Panc1 (cell line): ENCODE measurements at regions of chr5 and their contacts with region 1.

Region 1: DNA sequence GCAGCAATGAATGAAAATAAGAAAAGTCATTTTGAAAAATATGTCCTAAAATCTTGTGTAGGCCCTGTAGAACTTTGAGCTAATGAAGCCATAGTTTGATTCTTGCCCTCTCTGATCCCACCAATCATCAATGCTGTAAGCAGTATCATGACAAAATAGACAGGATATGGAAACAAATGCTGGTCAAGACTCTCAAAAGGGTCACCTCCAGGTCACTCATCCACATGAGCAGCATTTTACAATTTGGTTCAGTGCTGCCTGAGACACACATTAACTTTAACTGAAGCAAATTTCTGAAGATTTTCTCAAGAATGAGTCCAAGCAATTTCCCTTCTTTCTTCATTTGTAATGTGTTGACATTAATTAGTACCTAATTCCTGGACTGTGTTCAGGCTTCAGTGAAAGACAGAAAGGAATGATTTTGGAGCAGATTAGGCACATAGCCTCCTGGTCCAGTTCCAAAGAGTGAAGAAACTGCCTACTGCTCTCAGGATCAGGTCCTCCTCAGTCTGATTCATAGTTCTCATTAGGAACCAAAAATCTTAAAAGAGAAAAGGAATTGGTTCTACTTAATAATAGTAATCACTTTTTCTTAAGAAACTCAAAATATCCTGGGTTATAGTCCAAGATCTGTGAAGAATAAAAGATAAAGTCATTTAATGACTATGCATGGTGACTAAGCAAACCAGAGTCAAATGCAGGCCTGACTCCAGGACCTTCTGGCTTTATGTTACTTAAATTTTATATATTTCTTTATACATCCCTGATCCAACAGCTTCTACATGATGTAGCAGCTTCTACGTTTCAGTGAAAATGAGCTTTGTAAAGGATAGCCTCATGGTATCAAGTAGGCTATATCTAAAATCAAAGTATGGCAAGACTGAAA is 192.1 kb upstream of the RGMB start:
- DNase-seq: no peak
- ATAC-seq: no peak
- H3K4me3 ChIP-seq: no peak overlapping the region
- H3K27ac ChIP-seq: no peak overlapping the region
- H3K4me1 ChIP-seq: no peaks in the 10 kb centered on the region
- H3K27me3 ChIP-seq: no peaks in the 10 kb centered on the region
- CTCF ChIP-seq: no peak

Region 2: GRCh38 chr5:98200726-98201541 is 380.4 kb before region 1 on chr5:
- CTCF ChIA-PET with region 1: no interaction called
- POLR2A ChIA-PET with region 1: no interaction called
- in situ Hi-C with region 1: no loop called
- intact Hi-C with region 1: no loop called
- DNase-seq: no peak
- ATAC-seq: no peak
- H3K4me3 ChIP-seq: no peak overlapping the region
- H3K27ac ChIP-seq: no peak overlapping the region
- H3K4me1 ChIP-seq: no peaks in the 10 kb centered on the region
- H3K27me3 ChIP-seq: no peaks in the 10 kb centered on the region
- CTCF ChIP-seq: no peak

Region 3: GRCh38 chr5:98521821-98522220 is 59.5 kb before region 1 on chr5:
- CTCF ChIA-PET with region 1: no interaction called
- POLR2A ChIA-PET with region 1: no interaction called
- in situ Hi-C with region 1: no loop called
- intact Hi-C with region 1: no loop called
- DNase-seq: no peak
- ATAC-seq: no peak
- H3K4me3 ChIP-seq: no peak overlapping the region
- H3K27ac ChIP-seq: no peak overlapping the region
- H3K4me1 ChIP-seq: no peaks in the 10 kb centered on the region
- H3K27me3 ChIP-seq: no peaks in the 10 kb centered on the region
- CTCF ChIP-seq: no peak

Region 4: GRCh38 chr5:98768160-98769005 is 187.0 kb after region 1 on chr5:
- CTCF ChIA-PET with region 1: no interaction called
- POLR2A ChIA-PET with region 1: no interaction called
- in situ Hi-C with region 1: no loop called
- intact Hi-C with region 1: loop called (anchors 5 kb)
- DNase-seq: peak; percentile 87
- ATAC-seq: peak; percentile 42
- H3K4me3 ChIP-seq: peak overlapping the region; percentile 90
- H3K27ac ChIP-seq: no peak overlapping the region
- H3K4me1 ChIP-seq: peaks cover 12% of the 10 kb centered on the region
- H3K27me3 ChIP-seq: no peaks in the 10 kb centered on the region
- CTCF ChIP-seq: peak; percentile 93